Heart right ventricle (tissue), 16 donors: ENCODE measurements at regions of chr3 and their contacts with region 1.

Region 1: DNA sequence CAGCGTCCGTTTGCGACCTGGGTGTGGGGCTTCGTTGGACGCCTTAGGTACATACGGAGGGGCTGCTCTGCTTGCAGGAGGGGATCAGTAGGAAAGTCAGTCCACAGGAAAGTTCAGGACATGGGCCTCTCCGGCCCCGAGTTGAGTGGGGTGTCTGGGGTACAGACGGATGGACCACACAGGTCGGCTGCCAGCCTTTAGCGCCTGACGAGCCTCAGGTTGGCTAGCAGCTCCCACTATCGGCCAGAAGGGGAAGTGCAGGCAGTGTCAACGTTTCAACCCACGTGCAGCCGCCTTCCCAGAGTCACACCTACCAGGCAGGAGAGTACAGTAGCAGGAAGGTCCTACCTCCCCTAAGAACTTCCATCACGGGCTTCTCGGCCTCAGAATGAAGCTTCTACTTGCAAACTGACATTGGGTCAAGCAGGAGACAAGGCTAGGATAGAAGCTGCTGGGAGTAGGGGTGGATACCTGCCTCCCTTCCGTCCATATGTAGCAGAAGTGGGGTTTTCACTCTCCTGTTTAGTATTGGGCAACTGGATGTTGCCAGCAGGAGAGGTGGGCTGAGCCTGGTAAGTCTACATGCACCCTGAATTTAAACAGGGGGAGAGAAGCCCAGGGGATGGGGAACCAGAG is 1.8 kb upstream of the SCN5A start:
- DNase-seq: peak; percentile 56 to 68
- ATAC-seq: peak in 7 of 8 donors; percentile 25 to 66 (median 47)
- H3K4me3 ChIP-seq: no peak overlapping the region
- H3K27ac ChIP-seq: no peak overlapping the region
- H3K4me1 ChIP-seq: peaks cover 0 to 33% (median 13%) of the 10 kb centered on the region in 9 donors
- H3K27me3 ChIP-seq: peaks cover 0 to 52% (median 31%) of the 10 kb centered on the region in 7 donors
- CTCF ChIP-seq: peak; percentile 93 to 99 (median 98)

Region 2: GRCh38 chr3:38004415-38005076 is 646.7 kb before region 1 on chr3:
- intact Hi-C with region 1: loop called in 1 of 10 experiments (anchors 10 kb)
- DNase-seq: peak; percentile 65 to 75
- ATAC-seq: peak; percentile 58 to 79 (median 77)
- H3K4me3 ChIP-seq: peak overlapping the region in 6 of 10 donors; percentile 17 to 51 (median 42)
- H3K27ac ChIP-seq: peak overlapping the region; percentile 1 to 83 (median 56)
- H3K4me1 ChIP-seq: peaks cover 0 to 24% (median 6%) of the 10 kb centered on the region in 9 donors
- H3K27me3 ChIP-seq: no peaks in the 10 kb centered on the region
- CTCF ChIP-seq: peak; percentile 48 to 81 (median 70)

Region 3: DNA sequence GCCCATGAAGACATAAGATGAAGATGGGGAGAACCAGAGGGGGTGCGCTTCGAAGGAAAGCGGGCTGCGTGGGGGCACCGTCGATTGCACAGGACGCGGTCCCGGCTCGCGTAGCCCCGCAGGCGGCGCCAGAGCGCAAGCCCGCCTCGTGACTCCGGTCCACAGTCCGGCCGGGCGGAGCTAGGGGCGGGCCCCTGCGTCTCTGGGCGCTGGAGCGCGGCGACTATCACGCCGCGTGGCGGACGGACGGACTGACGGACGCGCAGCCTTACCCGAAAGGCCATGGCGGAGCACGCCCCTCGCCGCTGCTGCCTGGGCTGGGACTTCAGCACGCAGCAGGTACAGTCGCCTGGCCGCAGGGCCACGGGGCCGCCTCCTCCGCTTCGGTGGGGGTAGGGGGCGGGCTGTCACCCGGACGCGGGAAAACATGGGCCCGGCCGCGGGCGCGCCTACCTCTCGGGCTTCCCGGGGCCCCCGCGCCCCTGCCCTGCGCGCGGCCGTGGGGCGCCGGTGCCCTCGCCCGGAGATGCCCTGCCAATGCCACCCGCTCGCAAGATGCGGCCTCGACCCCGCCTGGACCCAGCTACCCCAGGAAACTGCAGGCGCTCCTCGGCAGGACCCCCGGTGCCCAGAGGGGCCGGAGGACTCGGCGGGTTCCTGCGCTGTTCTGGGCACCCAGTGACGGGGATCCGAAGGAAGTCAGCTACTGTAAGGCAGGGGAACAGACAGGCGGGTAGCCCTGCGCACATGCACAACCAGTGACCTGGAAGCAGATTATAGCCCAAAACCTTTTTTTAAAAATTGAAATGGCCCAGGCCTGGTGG is 304.5 kb before region 1 on chr3 and contains the start of gene XYLB:
- intact Hi-C with region 1: loop called in 1 of 10 experiments (anchors 10 kb)
- DNase-seq: peak; percentile 79 to 89
- ATAC-seq: peak; percentile 96 to 100 (median 99)
- H3K4me3 ChIP-seq: peak within 1 kb of the TSS; percentile 27 to 87 (median 82)
- H3K27ac ChIP-seq: peak within 1 kb of the TSS in 6 of 10 donors; percentile 29 to 75 (median 48)
- H3K4me1 ChIP-seq: peaks cover 0 to 22% (median 9%) of the 10 kb centered on the region in 9 donors
- H3K27me3 ChIP-seq: no peaks in the 10 kb centered on the region
- CTCF ChIP-seq: peak; percentile 68 to 95 (median 87)
- total RNA-seq, gene XYLB: 0.42 to 1.7 (median 0.73) TPM

Region 4: DNA sequence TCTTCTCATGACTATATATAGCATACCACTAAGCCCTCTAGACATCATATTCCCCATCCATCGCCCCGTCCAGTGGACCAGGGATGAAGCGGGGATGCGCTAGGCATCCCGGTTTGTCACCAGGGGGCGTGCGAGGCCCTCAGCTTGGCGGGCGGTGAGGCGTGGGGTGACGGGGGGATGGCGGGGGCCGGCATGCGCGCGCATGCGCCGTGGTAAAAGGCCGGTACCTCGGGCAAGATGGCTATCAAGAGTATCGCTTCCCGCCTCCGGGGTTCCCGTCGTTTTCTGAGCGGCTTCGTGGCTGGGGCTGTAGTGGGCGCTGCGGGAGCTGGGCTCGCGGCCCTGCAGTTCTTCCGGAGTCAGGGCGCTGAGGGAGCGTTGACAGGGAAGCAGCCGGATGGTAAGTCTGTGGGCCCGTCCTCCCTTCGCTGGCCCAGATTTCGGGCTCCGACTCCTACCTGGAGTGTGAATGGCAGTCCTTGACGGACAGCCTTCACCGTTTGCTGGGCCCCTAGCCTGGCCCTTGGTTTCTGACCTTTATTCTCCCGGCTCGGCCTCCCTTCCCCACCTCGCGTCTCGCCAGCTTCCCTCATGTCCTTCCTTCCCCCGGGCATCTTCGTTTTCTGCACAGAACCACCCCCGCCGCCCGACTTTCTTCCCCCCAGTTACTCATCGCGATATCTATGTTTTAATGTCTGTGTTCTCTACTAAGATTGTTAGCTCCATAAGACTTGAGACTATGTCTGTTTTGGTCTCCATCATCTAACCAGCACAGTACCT is 155.0 kb before region 1 on chr3 and contains the start of gene EXOG:
- intact Hi-C with region 1: loop called in 9 of 10 experiments (anchors 1 to 10 kb)
- DNase-seq: peak; percentile 96 to 98
- ATAC-seq: peak; percentile 92 to 96 (median 96)
- H3K4me3 ChIP-seq: peak within 1 kb of the TSS; percentile 63 to 85 (median 72)
- H3K27ac ChIP-seq: peak within 1 kb of the TSS; percentile 51 to 91 (median 82)
- H3K4me1 ChIP-seq: peaks cover 0 to 43% (median 10%) of the 10 kb centered on the region in 9 donors
- H3K27me3 ChIP-seq: no peaks in the 10 kb centered on the region
- CTCF ChIP-seq: peak; percentile 86 to 96 (median 91)
- total RNA-seq, gene EXOG: 11.9 to 38.9 (median 25.4) TPM

Region 5: GRCh38 chr3:38521391-38521987 is 129.8 kb before region 1 on chr3:
- intact Hi-C with region 1: loop called (anchors 1 to 5 kb)
- DNase-seq: peak in 1 of 2 donors; percentile 70
- ATAC-seq: peak; percentile 45 to 78 (median 70)
- H3K4me3 ChIP-seq: no peak overlapping the region
- H3K27ac ChIP-seq: peak overlapping the region in 7 of 10 donors; percentile 12 to 75 (median 63)
- H3K4me1 ChIP-seq: peaks cover 0 to 37% (median 16%) of the 10 kb centered on the region in 9 donors
- H3K27me3 ChIP-seq: no peaks in the 10 kb centered on the region
- CTCF ChIP-seq: peak; percentile 80 to 95 (median 92)

Region 6: GRCh38 chr3:38579551-38580449 is 71.5 kb before region 1 on chr3:
- intact Hi-C with region 1: loop called in 3 of 10 experiments (anchors 2 to 5 kb)
- DNase-seq: peak; percentile 53 to 59
- ATAC-seq: peak; percentile 49 to 84 (median 78)
- H3K4me3 ChIP-seq: no peak overlapping the region
- H3K27ac ChIP-seq: peak overlapping the region; percentile 50 to 98 (median 84)
- H3K4me1 ChIP-seq: peaks cover 16 to 86% (median 61%) of the 10 kb centered on the region in 9 donors
- H3K27me3 ChIP-seq: no peaks in the 10 kb centered on the region
- CTCF ChIP-seq: peak in 1 of 9 donors; percentile 10

Region 7: DNA sequence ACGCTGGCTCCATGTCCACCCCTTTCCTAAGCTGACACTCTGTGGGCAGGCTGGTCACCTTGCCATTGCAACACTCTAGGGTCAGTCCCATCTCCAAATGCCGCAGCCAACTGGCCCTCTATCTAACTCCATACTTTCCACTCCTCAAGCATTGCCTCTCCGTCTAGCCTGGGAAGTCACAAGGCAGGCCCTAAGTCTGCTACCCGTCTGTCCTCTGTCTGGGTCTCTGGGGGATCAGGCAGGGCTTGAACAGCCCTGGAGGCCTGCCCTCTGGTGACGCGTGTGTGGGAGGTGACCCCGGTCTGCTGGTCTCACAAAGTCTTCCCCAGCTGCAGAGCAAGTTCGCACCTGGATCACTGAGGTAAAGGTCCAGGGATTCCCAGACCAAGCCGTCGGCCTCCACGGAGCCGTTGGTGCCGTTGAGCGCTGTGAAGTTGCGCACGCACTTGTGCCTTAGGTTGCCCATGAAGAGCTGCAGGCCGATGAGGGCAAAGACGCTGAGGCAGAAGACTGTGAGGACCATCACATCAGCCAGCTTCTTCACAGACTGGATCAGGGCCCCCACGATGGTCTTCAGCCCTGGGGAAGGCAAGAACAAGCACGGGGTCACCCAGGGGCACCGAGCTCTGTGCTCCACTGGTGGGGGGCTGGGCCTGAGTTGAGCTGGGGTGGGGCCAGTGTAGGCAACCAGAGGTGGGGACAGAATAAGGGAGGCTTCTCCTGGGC is 41.7 kb before region 1 on chr3:
- intact Hi-C with region 1: loop called in 1 of 10 experiments (anchors 5 kb)
- DNase-seq: no peak
- ATAC-seq: no peak
- H3K4me3 ChIP-seq: no peak overlapping the region
- H3K27ac ChIP-seq: no peak overlapping the region
- H3K4me1 ChIP-seq: peaks cover 0 to 11% (median 4%) of the 10 kb centered on the region in 9 donors
- H3K27me3 ChIP-seq: no peaks in the 10 kb centered on the region
- CTCF ChIP-seq: no peak